IMR-90 (cell line): ENCODE measurements at regions of chr7 and their contacts with region 1.

Region 1: GRCh38 chr7:137081321-137082093 is 213.1 kb downstream of the CHRM2 start:
- DNase-seq: peak; percentile 98
- ATAC-seq: peak; percentile 69
- H3K4me3 ChIP-seq: no peak overlapping the region
- H3K27ac ChIP-seq: peak overlapping the region; percentile 99
- H3K4me1 ChIP-seq: peaks cover 13% of the 10 kb centered on the region
- H3K27me3 ChIP-seq: no peaks in the 10 kb centered on the region
- CTCF ChIP-seq: no peak
- POLR2A ChIP-seq: no peak
- RAD21 ChIP-seq: no peak

Region 2: GRCh38 chr7:136389933-136390332 is 691.6 kb before region 1 on chr7:
- CTCF ChIA-PET with region 1: no interaction called
- POLR2A ChIA-PET with region 1: no interaction called
- dilution Hi-C with region 1: no loop called
- in situ Hi-C with region 1: no loop called
- intact Hi-C with region 1: no loop called
- DNase-seq: no peak
- ATAC-seq: no peak
- H3K4me3 ChIP-seq: no peak overlapping the region
- H3K27ac ChIP-seq: no peak overlapping the region
- H3K4me1 ChIP-seq: no peaks in the 10 kb centered on the region
- H3K27me3 ChIP-seq: no peaks in the 10 kb centered on the region
- CTCF ChIP-seq: no peak
- POLR2A ChIP-seq: no peak
- RAD21 ChIP-seq: no peak

Region 3: GRCh38 chr7:136605532-136606329 is 475.8 kb before region 1 on chr7:
- CTCF ChIA-PET with region 1: no interaction called
- POLR2A ChIA-PET with region 1: no interaction called
- dilution Hi-C with region 1: no loop called
- in situ Hi-C with region 1: no loop called
- intact Hi-C with region 1: no loop called
- DNase-seq: no peak
- ATAC-seq: no peak
- H3K4me3 ChIP-seq: no peak overlapping the region
- H3K27ac ChIP-seq: no peak overlapping the region
- H3K4me1 ChIP-seq: no peaks in the 10 kb centered on the region
- H3K27me3 ChIP-seq: no peaks in the 10 kb centered on the region
- CTCF ChIP-seq: no peak
- POLR2A ChIP-seq: no peak
- RAD21 ChIP-seq: no peak

Region 4: DNA sequence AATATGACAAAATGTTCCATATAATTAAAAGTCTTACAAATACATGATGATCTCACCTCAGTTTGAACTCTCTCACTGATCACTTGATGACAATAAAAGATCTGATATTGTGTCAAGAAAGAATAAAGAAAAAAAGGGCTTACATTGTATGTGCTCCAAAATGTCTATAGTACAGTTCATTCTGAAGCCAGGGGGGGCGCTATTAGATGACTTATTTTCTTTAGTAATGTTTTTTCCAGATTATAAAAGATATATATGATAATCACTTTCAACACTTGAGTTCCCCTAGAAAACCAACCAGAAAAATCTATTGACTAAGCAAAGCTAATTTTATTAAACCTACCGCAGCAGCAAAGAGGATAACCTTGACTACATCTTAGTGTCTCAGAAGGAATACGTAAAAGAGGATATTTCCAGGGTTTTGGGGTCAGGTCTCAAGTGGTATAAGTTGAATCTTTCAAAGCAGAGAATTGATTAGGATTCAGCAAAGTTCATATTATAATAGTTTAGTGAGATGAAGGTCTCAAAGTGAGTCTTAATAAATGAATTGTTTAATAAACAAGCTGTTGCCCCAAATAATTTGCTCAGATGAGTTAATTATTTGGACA is 206.2 kb after region 1 on chr7:
- CTCF ChIA-PET with region 1: no interaction called
- POLR2A ChIA-PET with region 1: no interaction called
- dilution Hi-C with region 1: no loop called
- in situ Hi-C with region 1: no loop called
- intact Hi-C with region 1: loop called (anchors 10 kb)
- DNase-seq: peak; percentile 12
- ATAC-seq: no peak
- H3K4me3 ChIP-seq: no peak overlapping the region
- H3K27ac ChIP-seq: no peak overlapping the region
- H3K4me1 ChIP-seq: peaks cover 2% of the 10 kb centered on the region; the same call in 1 of the 2 replicates
- H3K27me3 ChIP-seq: no peaks in the 10 kb centered on the region
- CTCF ChIP-seq: peak; percentile 44
- POLR2A ChIP-seq: no peak
- RAD21 ChIP-seq: peak; percentile 26; the same call in 1 of the 2 replicates